Activated T-helper 1 cell treated with anti-CD3 and anti-CD28 coated beads, Interleukin-12 subunit alpha, Interleukin-12 subunit beta, Interleukin-2, Interleukin-4 antibody, amounts not matched to agents 30 ng/mL and 10 ng/mL and 1 ng/mL, durations not matched to agents 14 hours and 24 hours and 36 hours (primary cell): ENCODE measurements at regions of chr4 and their contacts with region 1.

Region 1: GRCh38 chr4:98601708-98602107 is 56.7 kb downstream of the TSPAN5 start:
- DNase-seq: no peak
- H3K4me3 Mint-ChIP-seq: peak overlapping the region; percentile 73
- H3K27ac Mint-ChIP-seq: peak overlapping the region; percentile 90
- H3K4me1 Mint-ChIP-seq: peaks cover 60% of the 10 kb centered on the region
- H3K27me3 Mint-ChIP-seq: no peaks in the 10 kb centered on the region

Region 2: GRCh38 chr4:98143001-98143899 is 458.5 kb before region 1 on chr4 and contains the start of gene STPG2:
- intact Hi-C with region 1: loop called (anchors 2 kb)
- DNase-seq: peak; percentile 91
- H3K4me3 Mint-ChIP-seq: peak within 1 kb of the TSS; percentile 88
- H3K27ac Mint-ChIP-seq: peak within 1 kb of the TSS; percentile 93
- H3K4me1 Mint-ChIP-seq: peaks cover 18% of the 10 kb centered on the region
- H3K27me3 Mint-ChIP-seq: peaks cover 7% of the 10 kb centered on the region
- total RNA-seq, gene STPG2: not detected in 2 replicates

Region 3: GRCh38 chr4:98446499-98447375 is 155.0 kb before region 1 on chr4:
- intact Hi-C with region 1: loop called (anchors 1 kb)
- DNase-seq: peak; percentile 44
- H3K4me3 Mint-ChIP-seq: peak overlapping the region; percentile 67
- H3K27ac Mint-ChIP-seq: peak overlapping the region; percentile 90
- H3K4me1 Mint-ChIP-seq: peaks cover 43% of the 10 kb centered on the region
- H3K27me3 Mint-ChIP-seq: peaks cover 3% of the 10 kb centered on the region

Region 4: GRCh38 chr4:98510757-98511517 is 90.8 kb before region 1 on chr4:
- intact Hi-C with region 1: loop called (anchors 1 kb)
- DNase-seq: peak; percentile 34
- H3K4me3 Mint-ChIP-seq: peak overlapping the region; percentile 47
- H3K27ac Mint-ChIP-seq: peak overlapping the region; percentile 83
- H3K4me1 Mint-ChIP-seq: peaks cover 85% of the 10 kb centered on the region
- H3K27me3 Mint-ChIP-seq: no peaks in the 10 kb centered on the region

Region 5: DNA sequence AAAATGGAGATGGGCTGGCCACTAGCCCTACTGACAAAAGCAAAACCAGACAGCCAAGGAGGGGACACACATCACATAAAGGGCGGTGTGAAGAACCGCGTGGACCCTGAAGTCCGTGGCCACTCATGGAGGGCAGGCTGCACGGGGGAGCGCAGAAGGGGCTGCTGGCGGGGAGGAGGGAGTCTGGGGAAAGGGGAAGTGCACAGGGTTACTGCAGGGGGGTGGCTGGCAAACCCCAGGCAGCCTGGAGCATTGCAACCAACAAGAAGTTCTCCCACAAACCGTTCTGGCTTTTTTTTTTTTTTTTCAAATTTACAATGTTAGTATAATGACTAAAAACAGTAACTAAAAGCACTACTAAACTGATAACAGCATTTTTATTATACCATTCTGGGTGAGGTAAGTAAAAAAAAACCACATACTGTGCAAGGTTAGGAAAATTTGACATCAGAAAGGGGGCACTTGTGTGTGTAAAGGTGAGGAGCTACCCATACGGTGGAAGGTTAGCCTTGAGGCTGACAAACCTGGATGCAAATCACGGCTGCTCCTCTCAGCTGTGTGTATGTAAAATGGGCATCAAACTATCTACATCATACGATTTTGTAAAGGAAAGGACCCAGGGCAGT is 30.4 kb before region 1 on chr4:
- intact Hi-C with region 1: loop called (anchors 2 kb)
- DNase-seq: no peak
- H3K4me3 Mint-ChIP-seq: no peak overlapping the region
- H3K27ac Mint-ChIP-seq: peak overlapping the region; percentile 15
- H3K4me1 Mint-ChIP-seq: peaks cover 49% of the 10 kb centered on the region
- H3K27me3 Mint-ChIP-seq: no peaks in the 10 kb centered on the region

Region 6: GRCh38 chr4:98928505-98929340 is 327.0 kb after region 1 on chr4 and contains the start of gene EIF4E:
- intact Hi-C with region 1: loop called (anchors 1 kb)
- DNase-seq: peak; percentile 96
- H3K4me3 Mint-ChIP-seq: peak within 1 kb of the TSS; percentile 98
- H3K27ac Mint-ChIP-seq: peak within 1 kb of the TSS; percentile 100
- H3K4me1 Mint-ChIP-seq: peaks cover 46% of the 10 kb centered on the region
- H3K27me3 Mint-ChIP-seq: no peaks in the 10 kb centered on the region
- total RNA-seq, gene EIF4E: 137 and 147 TPM in 2 replicates